GM10248 (cell line): ENCODE measurements at regions of chr1 and their contacts with region 1.

Region 1: GRCh38 chr1:21189906-21190500 is 13.3 kb upstream of the EIF4G3 start:
- DNase-seq: no peak
- CTCF ChIP-seq: no peak

Region 2: GRCh38 chr1:20981915-20982314 is 208.1 kb before region 1 on chr1:
- CTCF ChIA-PET with region 1: interaction called, 37 read pairs
- POLR2A ChIA-PET with region 1: no interaction called
- DNase-seq: no peak
- CTCF ChIP-seq: peak; percentile 21

Region 3: GRCh38 chr1:21468599-21468998 is 278.6 kb after region 1 on chr1:
- CTCF ChIA-PET with region 1: no interaction called
- POLR2A ChIA-PET with region 1: no interaction called
- DNase-seq: no peak
- CTCF ChIP-seq: peak; percentile 26

Region 4: GRCh38 chr1:21511579-21512522 is 321.8 kb after region 1 on chr1:
- CTCF ChIA-PET with region 1: no interaction called
- POLR2A ChIA-PET with region 1: no interaction called
- DNase-seq: no peak
- CTCF ChIP-seq: no peak